Activated naive CD4-positive, alpha-beta T cell treated with anti-CD3 and anti-CD28 coated beads for 36 hours (primary cell): ENCODE measurements at regions of chr12 and their contacts with region 1.

Region 1: DNA sequence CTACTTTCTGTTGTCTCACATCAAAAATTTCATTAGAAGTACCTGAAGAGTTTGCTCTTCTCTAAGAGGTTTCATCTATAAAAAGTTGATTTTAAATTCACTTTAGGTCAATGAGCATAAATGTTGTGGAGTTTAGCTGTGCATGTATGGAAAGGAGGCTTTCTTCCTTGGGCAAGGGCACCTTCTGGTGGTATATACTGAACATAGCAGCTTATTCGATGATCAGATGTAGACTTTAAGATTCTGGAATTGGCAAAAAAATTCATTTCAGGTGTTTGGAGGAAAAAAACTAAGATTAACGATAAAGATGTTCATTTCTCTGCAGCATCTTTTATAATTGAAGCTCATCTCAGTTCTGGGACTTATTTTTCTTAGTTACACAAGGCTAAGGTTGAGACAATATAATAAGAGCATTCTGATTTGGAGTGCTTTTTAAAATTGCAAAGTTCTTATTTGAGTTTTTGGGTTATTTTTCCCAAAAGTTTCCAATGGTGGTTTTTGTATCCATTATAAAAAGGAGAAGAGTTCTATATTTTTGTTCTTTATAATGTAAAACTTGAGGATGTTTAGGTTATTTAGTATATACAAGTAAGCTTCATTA is 46.8 kb downstream of the TMEM117 start:
- DNase-seq: peak; percentile 48
- H3K4me3 Mint-ChIP-seq: no peak overlapping the region
- H3K27ac Mint-ChIP-seq: no peak overlapping the region
- H3K4me1 Mint-ChIP-seq: no peaks in the 10 kb centered on the region
- H3K27me3 Mint-ChIP-seq: no peaks in the 10 kb centered on the region

Region 2: GRCh38 chr12:42482445-42483237 is 1400.0 kb before region 1 on chr12:
- CTCF ChIA-PET with region 1: no interaction called
- intact Hi-C with region 1: loop called (anchors 2 kb)
- DNase-seq: peak; percentile 52
- H3K4me3 Mint-ChIP-seq: peak overlapping the region; percentile 71
- H3K27ac Mint-ChIP-seq: no peak overlapping the region
- H3K4me1 Mint-ChIP-seq: peaks cover 7% of the 10 kb centered on the region
- H3K27me3 Mint-ChIP-seq: peaks cover 67% of the 10 kb centered on the region

Region 3: GRCh38 chr12:43349863-43350262 is 532.8 kb before region 1 on chr12:
- CTCF ChIA-PET with region 1: no interaction called
- intact Hi-C with region 1: loop called (anchors 5 kb)
- DNase-seq: no peak
- H3K4me3 Mint-ChIP-seq: no peak overlapping the region
- H3K27ac Mint-ChIP-seq: no peak overlapping the region
- H3K4me1 Mint-ChIP-seq: no peaks in the 10 kb centered on the region
- H3K27me3 Mint-ChIP-seq: peaks cover 2% of the 10 kb centered on the region

Region 4: GRCh38 chr12:43501703-43502102 is 381.0 kb before region 1 on chr12:
- CTCF ChIA-PET with region 1: no interaction called
- intact Hi-C with region 1: loop called (anchors 1 kb)
- DNase-seq: no peak
- H3K4me3 Mint-ChIP-seq: no peak overlapping the region
- H3K27ac Mint-ChIP-seq: no peak overlapping the region
- H3K4me1 Mint-ChIP-seq: no peaks in the 10 kb centered on the region
- H3K27me3 Mint-ChIP-seq: peaks cover 2% of the 10 kb centered on the region

Region 5: DNA sequence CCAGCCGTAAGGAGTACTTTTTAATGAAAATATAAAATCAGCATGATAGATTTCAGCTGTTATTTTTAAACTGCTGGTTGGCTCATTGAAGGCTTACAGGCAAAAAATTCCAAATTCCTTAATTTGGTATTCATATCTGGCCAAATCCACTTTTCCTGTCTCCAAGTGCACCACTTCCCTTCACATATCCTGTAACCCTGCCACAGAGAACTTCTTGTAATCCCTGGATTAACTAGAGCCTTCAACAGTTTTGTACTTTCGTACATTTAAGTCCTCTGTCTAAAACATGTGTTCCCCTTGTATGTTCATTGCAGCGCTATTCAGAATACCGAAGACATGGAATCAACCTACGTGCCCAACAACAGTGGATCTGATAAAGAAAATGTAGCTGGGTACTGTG is 133.7 kb before region 1 on chr12:
- CTCF ChIA-PET with region 1: no interaction called
- intact Hi-C with region 1: no loop called
- DNase-seq: no peak
- H3K4me3 Mint-ChIP-seq: no peak overlapping the region
- H3K27ac Mint-ChIP-seq: no peak overlapping the region
- H3K4me1 Mint-ChIP-seq: peaks cover 11% of the 10 kb centered on the region
- H3K27me3 Mint-ChIP-seq: no peaks in the 10 kb centered on the region

Region 6: DNA sequence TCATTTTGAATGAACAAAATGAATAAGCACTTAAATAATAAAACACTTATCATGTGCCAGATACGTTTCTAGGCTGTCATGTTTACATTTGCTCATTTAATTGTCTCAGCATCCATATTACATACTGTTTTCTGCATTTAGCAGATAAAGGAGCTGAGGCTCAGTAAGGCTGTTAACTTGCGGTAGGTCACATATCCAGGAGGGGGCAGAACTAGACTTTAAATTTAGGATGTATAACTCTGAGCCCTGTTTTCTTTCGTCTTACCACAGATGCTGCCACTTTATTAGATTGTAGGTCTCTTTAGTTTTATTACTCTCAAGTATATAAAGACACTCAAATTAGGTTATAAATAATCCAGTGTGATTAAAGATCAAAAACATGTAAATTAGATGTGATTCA is 106.2 kb before region 1 on chr12:
- CTCF ChIA-PET with region 1: interaction called, 23 read pairs
- intact Hi-C with region 1: loop called (anchors 1 kb)
- DNase-seq: no peak
- H3K4me3 Mint-ChIP-seq: no peak overlapping the region
- H3K27ac Mint-ChIP-seq: no peak overlapping the region
- H3K4me1 Mint-ChIP-seq: peaks cover 2% of the 10 kb centered on the region
- H3K27me3 Mint-ChIP-seq: no peaks in the 10 kb centered on the region

Region 7: GRCh38 chr12:43835656-43836474 is 46.8 kb before region 1 on chr12 and contains the start of gene TMEM117:
- CTCF ChIA-PET with region 1: interaction called, 7 read pairs
- intact Hi-C with region 1: loop called (anchors 2 kb)
- DNase-seq: peak; percentile 62
- H3K4me3 Mint-ChIP-seq: peak within 1 kb of the TSS; percentile 72
- H3K27ac Mint-ChIP-seq: peak within 1 kb of the TSS; percentile 66
- H3K4me1 Mint-ChIP-seq: peaks cover 42% of the 10 kb centered on the region
- H3K27me3 Mint-ChIP-seq: no peaks in the 10 kb centered on the region
- total RNA-seq, gene TMEM117: 1.4 to 2.1 TPM

Region 8: DNA sequence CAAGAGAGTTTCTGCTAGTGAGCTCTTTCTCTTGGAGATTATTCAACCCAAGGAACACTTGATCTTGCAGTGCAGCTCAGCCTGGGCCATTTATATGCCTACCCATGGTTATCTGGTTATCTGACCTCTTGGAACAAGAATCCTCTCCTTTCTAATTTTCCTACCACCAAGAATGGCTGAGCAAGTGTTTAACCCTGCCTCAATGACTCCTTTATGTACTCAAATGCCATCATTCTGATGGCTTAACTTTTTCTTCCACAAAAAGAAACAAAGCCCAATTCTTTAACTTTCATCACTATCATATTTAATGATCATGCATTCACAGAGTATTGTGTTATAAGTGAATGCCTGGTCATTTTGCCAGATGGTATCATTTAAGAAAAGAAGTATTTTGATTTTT is 21.0 kb after region 1 on chr12:
- CTCF ChIA-PET with region 1: no interaction called
- intact Hi-C with region 1: no loop called
- DNase-seq: no peak
- H3K4me3 Mint-ChIP-seq: no peak overlapping the region
- H3K27ac Mint-ChIP-seq: no peak overlapping the region
- H3K4me1 Mint-ChIP-seq: no peaks in the 10 kb centered on the region
- H3K27me3 Mint-ChIP-seq: no peaks in the 10 kb centered on the region